ENCODE measurements at regions of chr12 and their contacts with region 1.

Region 1: GRCh38 chr12:45388545-45388944 is 172.7 kb downstream of the ANO6 start:
- DNase-seq: peak; percentile 6
- ATAC-seq: 0 out of 2 replicates have a peak, but pooled peaks have one; percentile 55
- H3K4me3 ChIP-seq: no peak overlapping the region
- H3K27ac ChIP-seq: no peak overlapping the region
- H3K4me1 ChIP-seq: no peaks in the 10 kb centered on the region
- H3K27me3 ChIP-seq: no peaks in the 10 kb centered on the region
- CTCF ChIP-seq: peak; percentile 58 to 62 (median 61); a peak in 5 of 6 replicates
- POLR2A ChIP-seq: no peak
- RAD21 ChIP-seq: peak; percentile 70

Region 2: DNA sequence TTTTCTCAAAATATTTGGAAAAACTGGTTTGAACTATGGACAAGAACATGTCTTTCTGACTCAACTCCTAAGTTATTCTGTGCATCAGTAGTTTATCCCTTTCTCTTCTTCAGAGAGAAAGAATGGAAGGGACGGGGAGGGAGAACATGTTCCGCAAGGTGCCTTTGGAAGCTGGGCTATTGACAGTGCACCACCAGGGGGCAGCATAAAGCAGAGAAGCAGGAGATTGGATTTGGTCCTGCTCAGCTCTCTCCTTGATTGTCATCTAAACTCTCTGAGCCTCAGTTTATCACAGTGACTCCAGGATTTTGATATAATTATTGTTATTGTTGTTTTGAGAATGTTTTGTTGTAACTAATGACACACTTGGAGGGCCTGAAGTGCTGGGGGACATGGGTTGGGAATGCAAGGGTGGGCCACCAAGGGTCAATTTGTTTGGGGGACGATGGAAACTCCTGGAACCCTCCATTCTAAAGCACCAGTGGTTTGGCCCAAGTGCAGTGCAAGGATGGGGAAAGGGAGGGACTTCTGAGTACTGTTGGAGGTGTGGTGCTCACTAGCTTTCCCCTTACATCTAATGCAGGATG is 218.0 kb before region 1 on chr12:
- CTCF ChIA-PET with region 1: interaction called, 8 read pairs
- POLR2A ChIA-PET with region 1: no interaction called
- RAD21 ChIA-PET with region 1: interaction called in 1 of 2 experiments, 3 read pairs
- intact Hi-C with region 1: loop called (anchors 1 kb)
- DNase-seq: peak; percentile 62
- ATAC-seq: peak; percentile 87
- H3K4me3 ChIP-seq: no peak overlapping the region
- H3K27ac ChIP-seq: no peak overlapping the region
- H3K4me1 ChIP-seq: no peaks in the 10 kb centered on the region
- H3K27me3 ChIP-seq: no peaks in the 10 kb centered on the region
- CTCF ChIP-seq: peak; percentile 57 to 95 (median 90); a peak in 5 of 6 replicates
- POLR2A ChIP-seq: no peak
- RAD21 ChIP-seq: peak; percentile 84

Region 3: DNA sequence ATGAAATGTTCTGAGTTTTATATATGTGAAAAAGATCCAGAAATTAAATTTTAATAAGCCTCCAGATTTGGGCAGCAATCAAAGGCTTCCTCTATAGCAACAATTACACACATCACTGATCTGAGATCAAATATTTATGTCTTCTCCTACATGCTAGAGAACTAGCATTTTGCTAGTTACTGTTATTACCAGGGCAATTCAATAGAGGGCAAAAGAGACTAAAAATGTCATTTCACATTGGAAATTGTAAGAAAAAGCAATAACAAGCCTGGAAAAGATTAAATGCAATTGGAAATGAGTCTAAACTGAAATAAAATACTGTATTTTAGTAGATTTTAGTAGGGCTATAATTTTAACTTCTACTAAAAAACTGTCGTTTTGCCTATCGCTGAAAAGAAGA is 205.3 kb before region 1 on chr12:
- CTCF ChIA-PET with region 1: interaction called, 10 read pairs
- POLR2A ChIA-PET with region 1: no interaction called
- RAD21 ChIA-PET with region 1: no interaction called
- intact Hi-C with region 1: no loop called
- DNase-seq: no peak
- ATAC-seq: no peak
- H3K4me3 ChIP-seq: no peak overlapping the region
- H3K27ac ChIP-seq: no peak overlapping the region
- H3K4me1 ChIP-seq: no peaks in the 10 kb centered on the region
- H3K27me3 ChIP-seq: no peaks in the 10 kb centered on the region
- CTCF ChIP-seq: peak; percentile 6 to 43 (median 27); a peak in 3 of 6 replicates
- POLR2A ChIP-seq: no peak
- RAD21 ChIP-seq: peak; percentile 60

Region 4: GRCh38 chr12:45268672-45269411 is 119.7 kb before region 1 on chr12:
- CTCF ChIA-PET with region 1: interaction called, 7 read pairs
- POLR2A ChIA-PET with region 1: no interaction called
- RAD21 ChIA-PET with region 1: no interaction called
- intact Hi-C with region 1: loop called (anchors 1 kb)
- DNase-seq: peak; percentile 56
- ATAC-seq: peak; percentile 75
- H3K4me3 ChIP-seq: peak overlapping the region in 1 of 2 experiments; percentile 19; a peak in 2 of 4 replicates
- H3K27ac ChIP-seq: peak overlapping the region; percentile 77
- H3K4me1 ChIP-seq: peaks cover 31 to 42% of the 10 kb centered on the region in 2 experiments
- H3K27me3 ChIP-seq: no peaks in the 10 kb centered on the region
- CTCF ChIP-seq: peak; percentile 56 to 78 (median 63); a peak in 5 of 6 replicates
- POLR2A ChIP-seq: no peak
- RAD21 ChIP-seq: peak; percentile 74

Region 5: DNA sequence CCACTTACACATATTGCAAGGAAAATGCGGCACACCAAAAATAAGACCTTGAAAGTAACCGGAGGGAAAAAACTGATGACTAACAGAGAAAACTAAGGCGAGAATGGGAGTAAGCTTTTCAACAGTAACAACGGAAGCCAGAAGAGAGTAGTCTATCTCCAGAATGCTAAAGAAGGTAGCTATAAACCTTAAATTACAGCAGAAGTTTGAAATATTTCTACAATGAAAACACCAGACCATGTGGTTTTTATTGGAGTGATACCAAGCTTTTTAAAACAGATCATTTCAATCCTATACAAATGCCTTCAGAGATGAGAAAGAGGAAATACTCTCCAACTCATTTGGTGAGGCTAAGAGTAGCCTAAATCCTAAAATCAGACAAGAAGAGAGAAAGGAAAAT is 36.9 kb after region 1 on chr12:
- CTCF ChIA-PET with region 1: no interaction called
- POLR2A ChIA-PET with region 1: no interaction called
- RAD21 ChIA-PET with region 1: no interaction called
- intact Hi-C with region 1: no loop called
- DNase-seq: no peak
- ATAC-seq: no peak
- H3K4me3 ChIP-seq: no peak overlapping the region
- H3K27ac ChIP-seq: no peak overlapping the region
- H3K4me1 ChIP-seq: no peaks in the 10 kb centered on the region
- H3K27me3 ChIP-seq: no peaks in the 10 kb centered on the region
- CTCF ChIP-seq: no peak
- POLR2A ChIP-seq: no peak
- RAD21 ChIP-seq: no peak

Region 6: DNA sequence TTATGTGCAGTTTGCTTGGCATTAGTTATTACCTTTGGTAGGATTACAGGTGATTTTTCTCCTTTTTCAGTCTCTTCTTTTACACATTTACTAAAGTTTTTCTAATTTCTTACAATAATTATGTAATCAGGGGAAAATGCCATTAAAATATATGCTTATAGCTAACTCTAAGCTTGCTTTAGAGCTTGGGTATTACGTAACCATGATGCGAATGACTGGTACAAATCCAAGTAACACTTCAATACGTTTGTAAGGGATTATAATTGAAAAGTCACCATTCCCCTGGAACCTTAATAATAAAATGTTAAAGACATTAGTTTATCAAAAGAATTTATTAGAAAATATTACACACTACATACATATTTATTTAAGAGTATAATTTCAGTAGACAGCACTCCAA is 530.3 kb after region 1 on chr12:
- CTCF ChIA-PET with region 1: no interaction called
- POLR2A ChIA-PET with region 1: no interaction called
- RAD21 ChIA-PET with region 1: no interaction called
- intact Hi-C with region 1: no loop called
- DNase-seq: no peak
- ATAC-seq: no peak
- H3K4me3 ChIP-seq: no peak overlapping the region
- H3K27ac ChIP-seq: no peak overlapping the region
- H3K4me1 ChIP-seq: no peaks in the 10 kb centered on the region
- H3K27me3 ChIP-seq: no peaks in the 10 kb centered on the region
- CTCF ChIP-seq: no peak
- POLR2A ChIP-seq: no peak
- RAD21 ChIP-seq: no peak

Measured in HCT116 (cell line).